A549 (cell line): ENCODE measurements at regions of chr17 and their contacts with region 1.

Region 1: GRCh38 chr17:4908301-4908700 is 5.4 kb upstream of the CHRNE start:
- DNase-seq: no peak
- ATAC-seq: no peak
- H3K4me3 ChIP-seq: no peak overlapping the region
- H3K27ac ChIP-seq: no peak overlapping the region
- H3K4me1 ChIP-seq: peaks cover 9% of the 10 kb centered on the region; the same call in 1 of the 3 replicates
- CTCF ChIP-seq: no peak
- EP300 ChIP-seq: no peak
- POLR2A ChIP-seq: no peak
- RAD21 ChIP-seq: no peak

Region 2: DNA sequence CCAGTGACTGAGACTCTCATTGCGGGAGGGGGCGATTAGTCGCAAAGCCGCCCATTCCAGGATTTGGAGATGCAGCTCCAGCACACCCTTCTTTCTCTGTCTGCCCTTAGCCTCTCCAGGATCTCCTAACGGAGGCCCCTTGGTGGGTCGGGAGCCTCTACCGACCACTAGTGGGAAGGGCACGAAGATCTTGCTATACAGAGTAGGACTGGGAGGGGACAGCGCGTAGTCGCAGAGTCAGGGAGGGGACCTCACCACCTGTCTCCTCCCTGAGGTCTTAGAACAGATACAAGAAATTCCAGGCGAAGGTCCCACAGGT is 324.6 kb before region 1 on chr17:
- CTCF ChIA-PET with region 1: no interaction called
- POLR2A ChIA-PET with region 1: no interaction called
- DNase-seq: peak; percentile 68 to 94
- ATAC-seq: peak; percentile 73 to 91
- H3K4me3 ChIP-seq: peak overlapping the region; percentile 49
- H3K27ac ChIP-seq: peak overlapping the region; percentile 23 to 70; a peak in 3 of 6 replicates
- H3K4me1 ChIP-seq: peaks cover 7% of the 10 kb centered on the region; the same call in 2 of the 3 replicates
- CTCF ChIP-seq: no peak; the same call in 2 of the 3 replicates
- EP300 ChIP-seq: no peak
- POLR2A ChIP-seq: no peak
- RAD21 ChIP-seq: no peak

Region 3: DNA sequence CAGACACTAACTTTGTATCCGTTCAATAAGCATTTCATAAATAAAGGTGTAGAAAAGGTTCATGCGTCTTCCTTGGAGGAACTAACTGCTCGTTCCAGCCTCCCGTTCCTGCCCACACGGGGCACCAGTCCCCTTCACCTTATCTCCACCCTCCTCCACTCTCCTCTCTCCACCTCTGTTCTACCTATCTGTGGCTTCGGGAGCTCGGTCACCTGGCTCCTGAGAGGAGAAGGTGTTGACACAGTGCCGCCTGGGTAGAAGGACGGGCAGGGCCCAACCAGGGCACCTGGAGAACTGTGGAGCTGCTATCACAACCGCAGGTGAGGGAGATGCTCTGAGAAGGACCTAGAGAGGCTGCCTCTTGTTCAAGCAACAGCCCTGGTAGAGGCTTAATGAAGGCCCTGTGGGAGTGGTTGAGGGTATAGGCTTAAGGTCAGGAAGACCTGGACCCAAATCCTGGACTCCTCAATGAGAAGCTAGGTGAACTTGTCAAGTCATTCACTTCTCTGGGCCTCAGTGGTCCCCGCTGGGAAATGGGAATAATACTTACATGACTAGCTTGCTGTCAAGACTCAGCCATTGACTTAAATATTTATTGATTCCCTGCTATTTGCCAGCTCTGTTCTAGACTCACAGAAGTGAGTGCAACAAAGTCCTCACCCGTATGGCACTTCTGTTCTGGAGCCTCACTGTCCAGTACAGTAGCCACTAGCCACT is 84.8 kb before region 1 on chr17:
- CTCF ChIA-PET with region 1: no interaction called
- POLR2A ChIA-PET with region 1: no interaction called
- DNase-seq: no peak
- ATAC-seq: peak; percentile 18 to 49; a peak in 3 of 6 replicates
- H3K4me3 ChIP-seq: no peak overlapping the region
- H3K27ac ChIP-seq: no peak overlapping the region
- H3K4me1 ChIP-seq: no peaks in the 10 kb centered on the region
- CTCF ChIP-seq: no peak
- EP300 ChIP-seq: no peak
- POLR2A ChIP-seq: no peak
- RAD21 ChIP-seq: no peak

Region 4: GRCh38 chr17:4891411-4892342 is 16.6 kb before region 1 on chr17:
- CTCF ChIA-PET with region 1: interaction called, 83 read pairs
- POLR2A ChIA-PET with region 1: no interaction called
- DNase-seq: no peak
- ATAC-seq: no peak
- H3K4me3 ChIP-seq: no peak overlapping the region
- H3K27ac ChIP-seq: no peak overlapping the region
- H3K4me1 ChIP-seq: no peaks in the 10 kb centered on the region
- CTCF ChIP-seq: no peak
- EP300 ChIP-seq: no peak
- POLR2A ChIP-seq: no peak
- RAD21 ChIP-seq: no peak

Region 5: GRCh38 chr17:4939796-4940624 is 31.7 kb after region 1 on chr17 and contains the starts of genes RNF167 and SLC25A11:
- CTCF ChIA-PET with region 1: interaction called, 16 read pairs
- POLR2A ChIA-PET with region 1: interaction called, 17 read pairs
- DNase-seq: peak; percentile 99 to 100
- ATAC-seq: peak; percentile 80 to 81
- H3K4me3 ChIP-seq: peak within 1 kb of the TSS; percentile 85
- H3K27ac ChIP-seq: peak within 1 kb of the TSS; percentile 89 to 93
- H3K4me1 ChIP-seq: peaks cover 49% of the 10 kb centered on the region
- CTCF ChIP-seq: no peak
- EP300 ChIP-seq: no peak
- POLR2A ChIP-seq: peak; percentile 91
- RAD21 ChIP-seq: 0 out of 5 replicates have a peak, but pooled peaks of 1 of the 2 experiments have one; percentile 5
- polyA plus RNA-seq, gene RNF167: 98.7 and 110 TPM in 2 replicates
- polyA plus RNA-seq, gene SLC25A11: 60.2 and 64.4 TPM in 2 replicates

Region 6: GRCh38 chr17:4966844-4967538 is 58.7 kb after region 1 on chr17:
- CTCF ChIA-PET with region 1: interaction called, 22 read pairs
- POLR2A ChIA-PET with region 1: interaction called, 4 read pairs
- DNase-seq: peak; percentile 100
- ATAC-seq: peak; percentile 89 to 95
- H3K4me3 ChIP-seq: peak overlapping the region; percentile 63
- H3K27ac ChIP-seq: peak overlapping the region; percentile 94 to 95
- H3K4me1 ChIP-seq: peaks cover 21% of the 10 kb centered on the region
- CTCF ChIP-seq: no peak
- EP300 ChIP-seq: no peak
- POLR2A ChIP-seq: peak; percentile 59; the same call in 1 of the 2 replicates
- RAD21 ChIP-seq: peak in 1 of 2 experiments; percentile 10; a peak in 1 of 5 replicates

Region 7: GRCh38 chr17:5055543-5055942 is 147.2 kb after region 1 on chr17:
- CTCF ChIA-PET with region 1: interaction called, 42 read pairs
- POLR2A ChIA-PET with region 1: no interaction called
- DNase-seq: peak in 1 of 2 experiments; percentile 77
- ATAC-seq: peak in 1 of 2 experiments; percentile 79; a peak in 3 of 6 replicates
- H3K4me3 ChIP-seq: no peak overlapping the region
- H3K27ac ChIP-seq: no peak overlapping the region
- H3K4me1 ChIP-seq: no peaks in the 10 kb centered on the region
- CTCF ChIP-seq: no peak
- EP300 ChIP-seq: no peak
- POLR2A ChIP-seq: no peak
- RAD21 ChIP-seq: no peak

Region 8: DNA sequence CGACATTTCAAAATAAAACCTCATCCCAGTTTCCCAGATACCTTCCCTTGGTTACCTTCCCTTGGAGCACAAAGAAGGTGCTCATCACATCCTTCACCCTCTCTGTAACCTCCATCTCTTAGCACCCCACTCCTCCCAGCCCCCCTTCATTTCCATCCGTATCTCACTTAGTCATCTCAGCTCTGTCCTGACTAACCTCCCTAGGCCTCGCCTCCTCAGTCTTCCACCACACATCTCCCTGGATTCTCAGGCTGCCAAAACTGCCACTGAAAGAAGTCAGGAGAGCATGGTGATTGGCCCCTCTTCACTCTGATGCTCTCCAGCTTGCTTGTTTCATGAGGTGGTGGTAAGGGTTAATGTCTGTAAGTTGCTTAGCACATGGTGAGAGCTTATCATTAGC is 172.3 kb after region 1 on chr17:
- CTCF ChIA-PET with region 1: no interaction called
- POLR2A ChIA-PET with region 1: no interaction called
- DNase-seq: no peak
- ATAC-seq: no peak
- H3K4me3 ChIP-seq: no peak overlapping the region
- H3K27ac ChIP-seq: no peak overlapping the region
- H3K4me1 ChIP-seq: no peaks in the 10 kb centered on the region
- CTCF ChIP-seq: no peak
- EP300 ChIP-seq: no peak
- POLR2A ChIP-seq: no peak
- RAD21 ChIP-seq: no peak